A673 (cell line): ENCODE measurements at regions of chr3 and their contacts with region 1.

Region 1: DNA sequence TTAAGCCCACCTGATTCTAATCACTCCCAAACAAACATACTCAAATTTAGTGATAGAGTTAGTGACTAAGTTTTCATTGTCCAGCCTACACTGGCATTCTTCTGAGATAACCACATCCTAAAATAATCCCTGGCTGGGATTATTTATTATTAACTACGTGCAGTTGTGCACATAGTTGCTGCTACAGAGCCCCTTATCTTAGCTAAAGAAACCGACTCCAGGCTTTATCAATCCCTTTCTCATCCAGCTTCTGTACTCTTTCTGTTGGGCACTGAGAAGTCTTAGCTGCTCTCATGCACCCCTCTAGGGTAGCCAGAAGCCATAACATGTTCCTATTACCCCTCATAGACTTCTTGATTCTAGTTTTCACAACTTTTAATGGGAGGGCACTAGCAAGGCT is 208.7 kb downstream of the MBNL1 start:
- DNase-seq: no peak
- H3K4me3 ChIP-seq: no peak overlapping the region
- H3K27ac ChIP-seq: no peak overlapping the region
- H3K4me1 ChIP-seq: no peaks in the 10 kb centered on the region
- H3K27me3 ChIP-seq: no peaks in the 10 kb centered on the region
- CTCF ChIP-seq: no peak

Region 2: DNA sequence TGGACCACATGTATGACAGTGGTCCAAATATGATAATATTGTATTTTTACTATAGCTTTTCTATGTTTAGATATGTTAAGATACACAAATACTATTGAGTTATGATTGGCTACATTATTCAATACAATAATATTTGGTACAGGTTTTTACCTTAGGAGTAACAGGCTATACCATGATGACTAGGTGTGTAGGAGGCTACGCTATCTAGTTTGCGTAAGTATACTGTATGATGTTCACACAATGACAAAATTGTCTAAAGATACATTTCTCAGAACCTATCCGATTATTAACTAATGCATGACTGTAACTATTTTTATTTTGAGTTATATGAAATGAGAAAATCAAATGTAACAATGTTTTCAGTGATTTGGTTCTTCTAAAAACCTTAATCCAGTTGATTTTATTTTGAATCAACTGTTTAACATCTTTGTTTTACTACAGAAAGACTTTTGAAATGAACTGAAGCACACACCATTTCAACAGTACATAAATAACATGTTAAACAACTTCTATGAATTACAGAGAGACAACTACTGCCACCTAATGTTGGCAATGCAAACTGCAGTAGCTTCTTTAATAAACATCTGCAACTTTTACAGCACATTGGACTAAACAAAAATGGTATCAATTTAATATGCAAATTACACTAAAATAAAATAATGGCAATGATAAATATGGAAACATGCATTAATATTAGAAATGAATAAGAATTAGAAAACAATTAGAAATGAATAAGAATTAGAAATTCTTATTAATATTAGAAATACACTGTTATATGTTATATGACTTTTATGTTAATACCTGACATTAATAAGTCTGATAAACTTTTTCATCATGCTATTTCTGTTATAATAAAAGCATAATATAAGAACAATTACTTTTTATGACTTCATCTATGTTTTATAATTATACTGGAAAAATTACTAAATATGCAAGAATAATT is 47.0 kb after region 1 on chr3:
- CTCF ChIA-PET with region 1: interaction called, 9 read pairs
- POLR2A ChIA-PET with region 1: no interaction called
- intact Hi-C with region 1: loop called (anchors 2 kb)
- DNase-seq: peak; percentile 73
- H3K4me3 ChIP-seq: no peak overlapping the region
- H3K27ac ChIP-seq: no peak overlapping the region
- H3K4me1 ChIP-seq: no peaks in the 10 kb centered on the region
- H3K27me3 ChIP-seq: no peaks in the 10 kb centered on the region
- CTCF ChIP-seq: peak; percentile 93

Region 3: DNA sequence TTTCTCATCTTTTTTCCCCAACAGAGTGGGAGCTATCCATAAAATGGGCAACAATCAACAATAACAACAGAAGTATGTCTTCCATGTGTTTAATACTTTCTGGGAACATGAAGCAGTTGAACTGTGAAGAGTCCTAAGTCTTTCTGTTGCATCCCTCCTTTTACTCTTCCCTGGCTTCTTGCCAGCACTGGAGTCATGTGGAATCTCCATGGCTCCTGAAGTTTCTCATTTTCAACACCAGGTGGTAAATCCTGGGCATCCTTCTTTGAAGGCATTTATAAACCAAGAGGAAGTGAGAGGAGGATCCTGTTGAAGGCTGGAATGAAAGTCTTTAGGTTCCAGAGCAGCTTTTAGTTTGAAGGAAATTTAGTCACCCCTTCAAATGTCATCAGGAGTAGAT is 317.3 kb after region 1 on chr3:
- CTCF ChIA-PET with region 1: no interaction called
- POLR2A ChIA-PET with region 1: no interaction called
- intact Hi-C with region 1: no loop called
- DNase-seq: peak; percentile 33
- H3K4me3 ChIP-seq: no peak overlapping the region
- H3K27ac ChIP-seq: no peak overlapping the region
- H3K4me1 ChIP-seq: peaks cover 11% of the 10 kb centered on the region
- H3K27me3 ChIP-seq: no peaks in the 10 kb centered on the region
- CTCF ChIP-seq: no peak

Region 4: DNA sequence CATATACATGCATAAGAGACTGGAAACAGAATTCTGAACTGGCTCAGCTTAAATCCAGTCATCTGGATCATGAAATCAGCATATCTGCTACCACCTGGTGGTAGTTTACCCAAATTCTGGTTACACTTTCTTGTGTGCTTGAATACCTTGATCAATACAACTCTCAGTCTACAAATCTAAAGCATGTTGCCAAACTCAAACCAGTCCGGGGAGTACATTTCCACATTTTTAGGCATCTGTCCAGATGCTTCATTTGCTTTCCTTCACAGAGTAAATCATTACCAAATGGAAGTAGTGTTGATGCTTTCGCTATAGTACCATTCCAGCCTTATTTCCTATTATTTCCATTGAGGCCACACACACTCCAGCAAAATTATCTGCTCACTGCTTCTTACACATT is 483.9 kb after region 1 on chr3:
- CTCF ChIA-PET with region 1: no interaction called
- POLR2A ChIA-PET with region 1: no interaction called
- intact Hi-C with region 1: loop called (anchors 5 kb)
- DNase-seq: peak; percentile 58
- H3K4me3 ChIP-seq: no peak overlapping the region
- H3K27ac ChIP-seq: no peak overlapping the region
- H3K4me1 ChIP-seq: peaks cover 5% of the 10 kb centered on the region
- H3K27me3 ChIP-seq: no peaks in the 10 kb centered on the region
- CTCF ChIP-seq: peak; percentile 61